Activated B cell treated with CpG ODN at 0.5 μM for 24 hours (primary cell): ENCODE measurements at regions of chr11 and their contacts with region 1.

Region 1: GRCh38 chr11:118488480-118489109 is 38.7 kb upstream of the TTC36 start:
- DNase-seq: peak; percentile 46
- ATAC-seq: peak; percentile 72
- H3K4me3 Mint-ChIP-seq: no peak overlapping the region
- H3K27ac Mint-ChIP-seq: no peak overlapping the region
- H3K4me1 Mint-ChIP-seq: no peaks in the 10 kb centered on the region
- H3K27me3 Mint-ChIP-seq: no peaks in the 10 kb centered on the region
- CTCF ChIP-seq: peak; percentile 41

Region 2: DNA sequence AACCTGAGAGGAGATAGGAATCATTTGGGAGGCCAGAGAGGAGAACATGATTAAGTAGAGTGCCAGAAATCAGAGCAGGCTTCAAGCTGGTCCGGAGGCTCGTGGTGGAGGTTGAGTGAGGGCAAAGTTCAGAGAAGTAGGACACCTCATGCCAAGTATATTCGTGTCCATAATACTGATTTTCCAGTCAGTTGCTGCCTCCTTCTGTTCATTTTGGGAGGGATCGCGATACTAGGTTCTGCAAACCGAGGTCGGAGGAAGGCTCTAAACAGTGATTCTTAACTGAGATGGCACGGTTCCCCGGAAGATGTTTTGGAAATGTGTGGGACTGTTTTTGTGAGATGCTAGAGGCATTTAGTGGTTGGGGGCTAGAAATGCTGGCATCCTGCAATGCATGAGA is 197.7 kb before region 1 on chr11:
- CTCF ChIA-PET with region 1: interaction called, 11 read pairs
- POLR2A ChIA-PET with region 1: no interaction called
- intact Hi-C with region 1: loop called (anchors 1 kb)
- DNase-seq: no peak
- ATAC-seq: peak; percentile 37
- H3K4me3 Mint-ChIP-seq: no peak overlapping the region
- H3K27ac Mint-ChIP-seq: no peak overlapping the region
- H3K4me1 Mint-ChIP-seq: no peaks in the 10 kb centered on the region
- H3K27me3 Mint-ChIP-seq: peaks cover 15% of the 10 kb centered on the region
- CTCF ChIP-seq: no peak

Region 3: DNA sequence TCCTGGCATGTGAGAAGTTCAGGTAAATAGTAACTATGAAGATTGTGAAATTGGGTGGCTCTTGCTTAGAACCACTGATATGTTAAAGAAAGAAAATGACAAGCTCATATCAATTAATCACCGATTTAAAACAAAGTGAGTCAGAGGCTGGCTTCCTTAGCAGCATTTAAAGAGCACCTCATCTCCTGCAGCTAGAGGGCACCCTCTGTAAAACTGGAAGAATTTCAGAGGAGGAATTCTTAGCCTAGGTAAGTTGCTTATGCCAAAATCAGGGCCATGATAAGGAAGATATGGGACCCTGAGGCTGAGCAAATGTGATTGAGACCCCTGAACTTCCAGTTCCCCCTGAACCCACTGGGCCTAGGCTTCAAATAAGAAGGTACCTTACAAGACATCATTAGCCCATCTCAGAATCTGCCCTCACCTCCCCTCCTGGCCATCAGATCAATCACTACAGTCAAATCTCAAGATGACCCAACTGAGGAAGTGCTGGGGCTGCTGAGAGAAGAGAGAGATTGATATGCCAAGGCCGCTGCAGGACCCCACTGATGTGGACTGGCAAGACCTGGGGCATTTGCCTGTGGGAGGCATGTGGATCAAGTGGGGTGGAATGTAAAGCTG is 192.7 kb before region 1 on chr11:
- CTCF ChIA-PET with region 1: interaction called, 11 read pairs
- POLR2A ChIA-PET with region 1: no interaction called
- intact Hi-C with region 1: loop called (anchors 1 kb)
- DNase-seq: no peak
- ATAC-seq: peak; percentile 34
- H3K4me3 Mint-ChIP-seq: no peak overlapping the region
- H3K27ac Mint-ChIP-seq: no peak overlapping the region
- H3K4me1 Mint-ChIP-seq: no peaks in the 10 kb centered on the region
- H3K27me3 Mint-ChIP-seq: peaks cover 11% of the 10 kb centered on the region
- CTCF ChIP-seq: peak; percentile 44